Activated CD4-positive, alpha-beta T cell treated with anti-CD3 and anti-CD28 coated beads, Interleukin-2, amount 10 ng/mL, durations not matched to agents 24 days and 14 days (primary cell): ENCODE measurements at regions of chr1 and their contacts with region 1.

Region 1: DNA sequence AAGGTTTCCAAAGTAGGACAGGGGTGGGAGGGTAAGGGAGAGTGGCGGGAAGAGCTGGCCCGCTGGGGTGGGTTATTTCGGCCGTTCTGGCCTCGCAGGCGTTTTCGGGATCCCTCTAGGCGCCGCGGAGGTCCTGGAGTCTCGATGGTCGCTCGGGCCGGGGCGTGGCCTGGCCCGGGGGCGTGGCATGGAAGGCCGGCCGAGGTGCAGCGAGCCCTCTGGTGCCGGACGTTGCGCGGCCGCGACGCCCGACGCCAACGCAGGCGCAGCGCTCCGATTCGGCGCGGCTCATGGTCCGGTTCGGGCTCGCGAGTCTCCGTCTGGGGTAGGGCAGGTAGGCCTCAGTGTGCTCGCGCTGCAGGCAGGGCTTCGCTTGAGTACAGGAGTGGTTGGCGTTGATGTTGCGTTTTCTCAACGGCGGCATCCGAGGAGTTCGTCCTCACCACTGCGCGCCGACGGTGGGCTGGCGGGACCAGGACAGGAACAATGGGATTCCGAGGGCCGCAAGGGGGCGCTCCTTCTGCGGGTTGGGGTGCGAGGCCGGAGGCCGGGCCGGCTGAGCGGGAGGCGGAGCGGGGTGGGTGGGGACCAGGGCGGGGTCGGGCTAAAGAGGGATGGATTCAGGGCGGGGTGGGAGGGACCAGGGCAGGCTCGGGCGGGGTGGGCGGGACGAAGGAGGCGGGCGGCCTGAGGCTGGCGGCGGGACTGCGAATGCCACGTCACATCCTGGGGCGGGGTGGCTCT is at the start of gene PGBD2:
- DNase-seq: peak; percentile 98
- H3K4me3 Mint-ChIP-seq: peak within 1 kb of the TSS; percentile 96
- H3K27ac Mint-ChIP-seq: peak within 1 kb of the TSS; percentile 99
- H3K4me1 Mint-ChIP-seq: peaks cover 29% of the 10 kb centered on the region
- H3K27me3 Mint-ChIP-seq: peaks cover 19% of the 10 kb centered on the region
- total RNA-seq, gene PGBD2: 7.4 and 7.6 TPM in 2 replicates

Region 2: DNA sequence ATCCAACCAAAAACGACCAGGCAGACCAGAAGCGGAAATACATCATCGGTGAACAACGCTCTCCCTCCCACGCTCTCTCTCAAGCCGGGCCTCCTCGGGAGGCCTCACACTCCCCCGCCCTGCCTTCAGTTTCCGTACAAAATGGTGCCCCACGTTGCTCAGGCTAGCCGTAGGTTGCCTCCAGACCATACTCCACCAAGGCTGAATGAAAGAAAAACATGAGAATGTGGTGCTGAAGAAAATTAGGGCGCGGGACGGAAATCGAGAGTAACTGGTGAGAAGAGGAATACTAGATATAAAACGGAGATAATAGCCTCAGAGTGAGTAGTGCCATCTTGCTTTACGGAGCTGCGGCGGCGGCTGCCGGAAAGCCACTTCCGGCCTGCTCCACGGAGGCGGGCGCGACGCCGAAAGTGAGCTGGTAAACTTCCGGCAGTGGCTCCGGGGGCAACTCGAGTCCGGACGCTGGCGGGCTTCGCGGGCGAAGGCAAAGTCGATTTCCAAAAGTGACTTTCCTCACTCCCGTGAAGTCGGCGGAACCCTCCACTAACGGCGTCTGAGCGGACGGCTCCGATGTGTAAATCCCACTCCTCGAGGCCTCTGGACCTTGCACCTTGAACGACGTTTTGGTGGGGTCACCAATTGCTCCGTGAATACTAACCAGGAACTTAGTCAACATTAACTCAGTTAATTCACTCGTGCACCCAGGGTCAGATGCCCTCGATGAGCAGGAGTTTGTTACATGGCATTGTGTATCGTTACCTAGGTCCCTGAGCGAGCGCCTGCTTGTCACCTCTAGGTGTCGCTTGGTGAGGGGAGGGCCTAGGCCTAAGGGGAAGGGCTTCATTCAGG is 80.0 kb before region 1 on chr1 and contains the start of gene SH3BP5L:
- intact Hi-C with region 1: loop called (anchors 1 kb)
- DNase-seq: peak; percentile 97
- H3K4me3 Mint-ChIP-seq: peak within 1 kb of the TSS; percentile 93
- H3K27ac Mint-ChIP-seq: peak within 1 kb of the TSS; percentile 100
- H3K4me1 Mint-ChIP-seq: peaks cover 45% of the 10 kb centered on the region
- H3K27me3 Mint-ChIP-seq: peaks cover 5% of the 10 kb centered on the region
- total RNA-seq, gene SH3BP5L: 27.5 and 28.2 TPM in 2 replicates

Region 3: DNA sequence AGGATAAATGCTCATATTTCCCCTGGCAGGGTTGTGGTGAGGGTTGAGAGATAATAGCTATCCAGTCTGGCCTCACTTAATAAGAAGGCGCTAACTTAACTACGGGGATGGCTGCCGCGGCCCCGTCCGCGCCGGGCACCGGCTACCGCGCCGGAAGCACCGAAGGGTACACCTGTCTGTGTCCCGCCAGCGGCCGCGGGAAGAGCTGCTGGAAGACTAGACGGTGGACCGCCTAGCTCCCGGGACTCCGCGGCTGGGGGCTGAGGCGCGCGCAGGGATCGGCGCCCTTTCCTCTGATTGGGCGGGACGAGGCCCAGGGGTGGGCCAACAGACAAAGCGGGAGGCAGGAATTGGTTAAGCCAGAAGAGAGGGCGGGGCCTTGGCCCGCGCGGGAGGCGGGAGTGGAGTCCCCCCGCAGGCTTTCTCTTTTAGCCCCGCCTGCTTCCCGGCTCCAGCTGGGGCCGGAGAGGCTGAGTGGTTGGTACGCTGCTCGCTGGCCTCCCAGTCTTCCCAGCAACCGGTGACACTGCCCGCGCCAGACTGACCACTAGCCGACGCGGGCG is 68.3 kb before region 1 on chr1 and contains the start of gene ZNF672:
- intact Hi-C with region 1: loop called (anchors 1 kb)
- DNase-seq: peak; percentile 99
- H3K4me3 Mint-ChIP-seq: no peak within 1 kb of the TSS
- H3K27ac Mint-ChIP-seq: no peak within 1 kb of the TSS
- H3K4me1 Mint-ChIP-seq: peaks cover 28% of the 10 kb centered on the region
- H3K27me3 Mint-ChIP-seq: peaks cover 2% of the 10 kb centered on the region
- total RNA-seq, gene ZNF672: 44.0 and 48.8 TPM in 2 replicates

Region 4: GRCh38 chr1:248858891-248859889 is 47.0 kb before region 1 on chr1 and contains the start of gene ZNF692:
- intact Hi-C with region 1: loop called (anchors 1 kb)
- DNase-seq: peak; percentile 99
- H3K4me3 Mint-ChIP-seq: peak within 1 kb of the TSS; percentile 96
- H3K27ac Mint-ChIP-seq: peak within 1 kb of the TSS; percentile 98
- H3K4me1 Mint-ChIP-seq: peaks cover 51% of the 10 kb centered on the region
- H3K27me3 Mint-ChIP-seq: no peaks in the 10 kb centered on the region
- total RNA-seq, gene ZNF692: 94.9 and 100 TPM in 2 replicates

Region 5: GRCh38 chr1:248873409-248873992 is 32.7 kb before region 1 on chr1:
- intact Hi-C with region 1: loop called (anchors 1 kb)
- DNase-seq: peak; percentile 97
- H3K4me3 Mint-ChIP-seq: peak overlapping the region; percentile 96
- H3K27ac Mint-ChIP-seq: peak overlapping the region; percentile 95
- H3K4me1 Mint-ChIP-seq: peaks cover 19% of the 10 kb centered on the region
- H3K27me3 Mint-ChIP-seq: peaks cover 14% of the 10 kb centered on the region

Region 6: DNA sequence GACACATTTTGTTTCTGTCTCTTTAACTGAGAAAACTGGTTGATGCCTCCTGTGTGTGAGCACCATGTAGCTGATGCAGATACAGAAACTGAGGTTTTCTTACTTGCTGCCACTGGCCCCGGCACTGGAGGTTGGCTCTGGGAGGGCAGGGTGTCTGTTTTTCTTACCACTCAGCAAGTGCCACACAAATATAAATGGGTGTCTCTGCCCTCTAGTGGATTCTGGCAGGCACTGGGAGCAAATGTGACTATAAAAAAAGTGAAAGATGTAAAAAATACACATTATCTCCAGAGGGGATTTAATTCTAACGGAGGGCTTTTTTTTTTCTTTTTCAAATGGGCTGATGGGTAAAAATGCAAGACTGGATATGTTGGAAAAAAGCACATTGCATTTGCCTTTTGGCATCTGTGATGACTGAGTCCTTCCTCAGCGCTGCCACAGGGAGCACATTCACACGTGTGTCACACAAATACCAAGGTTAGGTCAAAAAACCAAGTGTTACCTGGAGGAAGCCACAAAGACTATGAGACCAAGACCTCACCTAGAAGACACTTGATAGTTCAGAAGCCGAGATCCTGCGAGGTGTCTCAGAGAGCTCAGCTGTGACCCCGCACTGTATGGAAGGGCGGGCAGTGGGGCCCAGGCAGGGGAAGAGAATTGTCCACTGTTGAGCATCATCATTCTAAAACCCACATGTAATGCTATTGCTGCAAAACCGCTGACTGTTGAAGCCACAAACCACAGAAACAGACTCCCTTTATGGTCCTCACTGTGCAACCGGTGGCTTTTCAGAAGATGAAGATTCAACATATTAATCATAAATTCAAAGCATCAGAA is 18.7 kb after region 1 on chr1:
- intact Hi-C with region 1: loop called (anchors 1 kb)
- DNase-seq: peak; percentile 83
- H3K4me3 Mint-ChIP-seq: peak overlapping the region; percentile 18
- H3K27ac Mint-ChIP-seq: peak overlapping the region; percentile 21
- H3K4me1 Mint-ChIP-seq: peaks cover 35% of the 10 kb centered on the region
- H3K27me3 Mint-ChIP-seq: peaks cover 5% of the 10 kb centered on the region